ENCODE measurements at regions of chr10 and their contacts with region 1.

Region 1: DNA sequence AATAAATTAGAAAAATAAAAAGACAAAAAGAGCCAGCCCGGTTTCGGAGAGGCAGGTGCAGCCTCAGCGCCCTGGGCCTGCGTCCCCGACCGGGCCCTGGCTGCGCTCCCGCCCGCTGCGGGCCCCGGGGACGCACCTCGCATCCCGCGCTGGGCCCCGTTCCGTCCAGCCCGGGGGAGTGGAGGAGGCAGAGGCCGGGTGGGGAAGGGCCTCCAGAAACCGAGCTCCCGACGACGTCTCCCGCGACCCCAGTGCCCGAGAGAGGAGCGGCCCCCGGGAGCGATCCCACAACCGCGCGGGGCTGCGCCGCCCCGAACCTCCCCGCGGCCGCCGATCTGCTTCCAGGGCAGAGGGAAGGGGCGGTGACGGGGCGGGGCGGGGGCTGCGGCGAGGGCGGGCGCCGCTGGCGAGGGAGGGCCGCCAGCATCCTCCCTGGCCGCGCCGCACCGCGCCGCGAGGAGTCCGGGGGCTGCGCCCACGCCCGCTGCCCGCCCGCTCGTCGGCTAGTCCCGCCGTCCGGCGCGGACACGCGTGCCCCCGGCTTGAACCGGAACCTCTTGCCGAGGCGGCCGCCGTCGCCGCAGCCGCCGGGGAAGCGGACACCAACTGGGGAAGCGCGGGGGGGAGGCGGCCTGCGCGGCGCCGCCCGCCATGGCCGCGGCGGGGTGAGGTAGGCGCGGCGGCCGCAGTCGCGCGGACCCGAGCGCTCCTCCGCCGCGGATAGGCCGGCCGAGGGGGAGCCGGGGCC is at the start of gene CCNY:
- H3K4me3 Mint-ChIP-seq: peak within 1 kb of the TSS; percentile 92
- H3K27ac Mint-ChIP-seq: peak within 1 kb of the TSS; percentile 91
- H3K4me1 Mint-ChIP-seq: peaks cover 45% of the 10 kb centered on the region
- H3K27me3 Mint-ChIP-seq: no peaks in the 10 kb centered on the region

Region 2: GRCh38 chr10:35126530-35127296 is 209.5 kb before region 1 on chr10 and contains the start of gene CREM:
- intact Hi-C with region 1: loop called (anchors 10 kb)
- H3K4me3 Mint-ChIP-seq: peak within 1 kb of the TSS; percentile 84
- H3K27ac Mint-ChIP-seq: peak within 1 kb of the TSS; percentile 98
- H3K4me1 Mint-ChIP-seq: peaks cover 27% of the 10 kb centered on the region
- H3K27me3 Mint-ChIP-seq: no peaks in the 10 kb centered on the region

Region 3: GRCh38 chr10:35246770-35247343 is 89.4 kb before region 1 on chr10:
- intact Hi-C with region 1: loop called (anchors 5 kb)
- H3K4me3 Mint-ChIP-seq: no peak overlapping the region
- H3K27ac Mint-ChIP-seq: no peak overlapping the region
- H3K4me1 Mint-ChIP-seq: no peaks in the 10 kb centered on the region
- H3K27me3 Mint-ChIP-seq: peaks cover 7% of the 10 kb centered on the region

Region 4: DNA sequence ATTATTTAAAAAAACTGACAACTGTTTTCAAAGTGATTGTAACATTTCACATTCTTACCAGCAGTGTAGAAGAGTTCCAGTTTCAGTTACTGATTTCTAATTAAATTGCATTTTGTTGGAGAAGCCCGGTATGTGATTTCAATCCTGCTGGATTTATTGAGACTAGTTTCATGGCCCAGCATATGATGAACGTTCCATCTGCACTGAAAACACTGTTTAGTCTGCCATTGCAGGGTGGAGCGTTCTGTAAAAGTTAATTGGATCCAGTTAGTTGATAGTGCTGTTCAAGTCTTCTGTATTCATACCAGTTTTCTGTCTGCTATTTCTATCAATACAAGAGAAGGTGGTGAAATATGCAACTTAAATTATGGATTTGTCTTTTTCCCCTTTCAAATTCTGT is 37.2 kb before region 1 on chr10:
- intact Hi-C with region 1: loop called (anchors 5 kb)
- H3K4me3 Mint-ChIP-seq: no peak overlapping the region
- H3K27ac Mint-ChIP-seq: peak overlapping the region; percentile 88
- H3K4me1 Mint-ChIP-seq: peaks cover 37% of the 10 kb centered on the region
- H3K27me3 Mint-ChIP-seq: peaks cover 2% of the 10 kb centered on the region

Region 5: DNA sequence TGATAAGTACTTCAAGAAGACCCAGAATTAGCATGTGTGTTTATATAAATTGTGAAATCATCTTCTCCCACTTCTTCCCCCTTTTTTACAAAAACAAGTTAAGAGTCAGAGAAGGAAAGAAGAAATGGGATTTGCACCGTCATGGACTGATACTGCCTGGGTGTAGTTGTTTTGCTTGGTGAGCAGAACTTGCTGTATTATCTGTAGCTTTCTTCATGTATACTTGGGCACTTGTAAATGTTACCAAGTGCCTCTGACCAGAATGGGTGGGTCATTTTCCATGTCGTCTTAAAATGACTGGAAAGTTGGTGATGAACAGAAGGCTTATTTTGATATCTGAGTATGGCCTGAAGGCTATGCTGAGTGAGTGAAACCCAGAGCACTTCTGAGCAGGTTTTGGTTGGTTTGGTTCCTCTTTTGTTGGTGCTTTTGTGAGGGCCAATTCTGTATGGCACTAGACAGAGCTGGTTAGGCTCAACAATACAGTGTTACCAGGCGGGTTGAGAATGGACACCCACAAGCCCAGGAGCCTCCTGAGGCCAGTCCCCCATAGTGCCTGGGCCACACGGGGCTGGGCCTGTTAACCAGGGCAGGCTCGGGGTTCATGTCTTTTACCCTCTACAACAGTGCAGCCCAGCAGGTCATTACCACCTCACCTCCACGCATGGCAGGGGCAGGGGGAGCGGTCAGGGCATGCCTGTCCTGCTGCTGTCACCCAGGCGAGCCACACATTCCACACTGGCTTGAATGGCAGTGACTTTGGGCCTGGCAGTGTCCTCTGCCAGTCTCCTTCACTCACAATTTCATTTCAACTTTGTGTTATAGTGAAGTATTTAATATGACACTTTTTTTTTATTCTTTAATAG is 115.1 kb after region 1 on chr10:
- intact Hi-C with region 1: loop called (anchors 5 kb)
- H3K4me3 Mint-ChIP-seq: peak overlapping the region; percentile 53
- H3K27ac Mint-ChIP-seq: peak overlapping the region; percentile 91
- H3K4me1 Mint-ChIP-seq: peaks cover 81% of the 10 kb centered on the region
- H3K27me3 Mint-ChIP-seq: no peaks in the 10 kb centered on the region

Region 6: GRCh38 chr10:35523670-35524225 is 187.5 kb after region 1 on chr10:
- intact Hi-C with region 1: loop called (anchors 10 kb)
- H3K4me3 Mint-ChIP-seq: no peak overlapping the region
- H3K27ac Mint-ChIP-seq: no peak overlapping the region
- H3K4me1 Mint-ChIP-seq: peaks cover 56% of the 10 kb centered on the region
- H3K27me3 Mint-ChIP-seq: no peaks in the 10 kb centered on the region